ENCODE measurements at regions of chr12 and their contacts with region 1.

Region 1: DNA sequence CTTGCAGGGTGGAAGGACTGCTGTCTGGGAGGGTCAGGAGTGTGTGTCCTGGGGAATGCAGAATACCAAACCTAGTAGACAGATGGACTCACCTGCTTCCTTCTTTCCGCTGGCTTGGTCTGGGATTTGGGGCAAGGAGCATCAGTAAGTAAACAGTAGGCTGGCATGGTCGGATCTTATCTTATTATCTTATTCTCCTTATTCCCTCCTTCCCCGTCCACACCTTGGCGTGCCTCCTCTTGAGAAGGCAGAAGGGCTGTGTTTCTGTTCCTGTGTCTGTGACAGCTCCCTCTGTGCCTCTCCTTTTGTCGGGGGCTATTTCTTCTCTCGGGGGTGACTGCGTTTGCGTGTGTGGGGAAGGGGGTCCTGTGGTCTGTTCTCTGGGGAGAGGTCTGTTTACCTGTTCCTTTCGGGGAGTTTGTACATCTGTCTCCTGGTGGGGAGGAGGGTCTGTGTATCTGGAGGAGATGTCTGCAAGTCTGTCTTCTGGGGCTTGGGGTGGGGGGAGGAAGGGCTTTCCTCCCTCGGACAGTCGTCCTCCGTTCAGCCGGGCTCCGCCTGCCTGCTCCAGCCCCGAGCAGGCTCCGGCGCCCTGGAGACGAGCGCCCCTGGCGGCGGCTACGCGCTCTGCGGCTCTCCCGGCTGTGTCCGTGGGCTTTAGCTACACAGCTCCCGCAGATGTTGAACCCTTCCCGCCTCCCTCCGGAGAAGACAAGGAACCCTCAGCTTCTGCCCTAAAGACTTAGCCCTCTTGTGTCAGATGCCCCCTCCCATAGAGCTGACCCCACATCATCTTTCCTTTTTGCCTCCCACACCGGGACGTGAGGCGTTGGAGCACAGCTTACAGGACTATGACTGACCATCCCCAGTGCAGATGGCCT is 4.3 kb downstream of the KRT86 start:
- DNase-seq: no peak
- ATAC-seq: peak; percentile 83
- H3K4me3 ChIP-seq: peak overlapping the region in 1 of 2 experiments; percentile 27; a peak in 2 of 4 replicates
- H3K27ac ChIP-seq: peak overlapping the region; percentile 96
- H3K4me1 ChIP-seq: peaks cover 39% of the 10 kb centered on the region
- H3K27me3 ChIP-seq: no peaks in the 10 kb centered on the region
- CTCF ChIP-seq: peak; percentile 99

Region 2: GRCh38 chr12:52087961-52088820 is 190.6 kb before region 1 on chr12:
- CTCF ChIA-PET with region 1: no interaction called
- POLR2A ChIA-PET with region 1: no interaction called
- in situ Hi-C with region 1: no loop called
- intact Hi-C with region 1: no loop called
- DNase-seq: no peak
- ATAC-seq: 0 out of 2 replicates have a peak, but pooled peaks have one; percentile 20
- H3K4me3 ChIP-seq: no peak overlapping the region
- H3K27ac ChIP-seq: no peak overlapping the region
- H3K4me1 ChIP-seq: no peaks in the 10 kb centered on the region
- H3K27me3 ChIP-seq: peaks cover 14% of the 10 kb centered on the region
- CTCF ChIP-seq: no peak

Region 3: DNA sequence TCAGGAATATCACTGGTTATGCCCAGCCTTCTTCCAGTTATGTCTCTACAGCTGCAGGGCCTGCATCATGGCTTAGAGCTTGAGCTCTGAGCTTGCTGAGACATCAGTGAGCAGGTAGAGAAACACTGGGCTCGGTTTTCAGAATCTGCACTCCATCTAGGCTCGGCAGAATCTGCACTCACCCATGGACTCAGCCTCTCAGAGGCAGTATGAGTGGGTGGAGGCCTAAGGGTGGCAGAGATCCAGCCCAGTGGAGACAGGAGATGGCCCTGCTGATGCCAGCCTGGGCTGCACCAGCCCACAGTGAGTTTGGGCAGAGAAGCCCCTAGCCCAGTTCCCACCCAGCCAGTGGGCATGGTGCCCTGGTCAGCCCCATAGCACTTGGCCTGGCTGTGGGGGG is 99.8 kb before region 1 on chr12:
- CTCF ChIA-PET with region 1: no interaction called
- POLR2A ChIA-PET with region 1: no interaction called
- in situ Hi-C with region 1: no loop called
- intact Hi-C with region 1: no loop called
- DNase-seq: no peak
- ATAC-seq: no peak
- H3K4me3 ChIP-seq: no peak overlapping the region
- H3K27ac ChIP-seq: no peak overlapping the region
- H3K4me1 ChIP-seq: peaks cover 46% of the 10 kb centered on the region
- H3K27me3 ChIP-seq: no peaks in the 10 kb centered on the region
- CTCF ChIP-seq: no peak

Region 4: GRCh38 chr12:52215587-52216048 is 63.2 kb before region 1 on chr12:
- CTCF ChIA-PET with region 1: interaction called, 16 read pairs
- POLR2A ChIA-PET with region 1: no interaction called
- in situ Hi-C with region 1: no loop called
- intact Hi-C with region 1: loop called (anchors 10 kb)
- DNase-seq: peak; percentile 60
- ATAC-seq: peak; percentile 79
- H3K4me3 ChIP-seq: no peak overlapping the region
- H3K27ac ChIP-seq: peak overlapping the region; percentile 91
- H3K4me1 ChIP-seq: peaks cover 43% of the 10 kb centered on the region
- H3K27me3 ChIP-seq: no peaks in the 10 kb centered on the region
- CTCF ChIP-seq: no peak

Region 5: GRCh38 chr12:52221912-52222457 is 56.8 kb before region 1 on chr12:
- CTCF ChIA-PET with region 1: interaction called, 3 read pairs
- POLR2A ChIA-PET with region 1: interaction called, 3 read pairs
- in situ Hi-C with region 1: no loop called
- intact Hi-C with region 1: loop called (anchors 10 kb)
- DNase-seq: no peak
- ATAC-seq: peak; percentile 60
- H3K4me3 ChIP-seq: no peak overlapping the region
- H3K27ac ChIP-seq: peak overlapping the region; percentile 71
- H3K4me1 ChIP-seq: peaks cover 21% of the 10 kb centered on the region
- H3K27me3 ChIP-seq: no peaks in the 10 kb centered on the region
- CTCF ChIP-seq: peak; percentile 77

Region 6: GRCh38 chr12:52327052-52327829 is 48.5 kb after region 1 on chr12:
- CTCF ChIA-PET with region 1: interaction called, 3 read pairs
- POLR2A ChIA-PET with region 1: no interaction called
- in situ Hi-C with region 1: loop called (anchors 5 kb)
- intact Hi-C with region 1: no loop called
- DNase-seq: peak; percentile 96
- ATAC-seq: peak; percentile 97
- H3K4me3 ChIP-seq: no peak overlapping the region
- H3K27ac ChIP-seq: peak overlapping the region; percentile 5
- H3K4me1 ChIP-seq: peaks cover 7% of the 10 kb centered on the region
- H3K27me3 ChIP-seq: no peaks in the 10 kb centered on the region
- CTCF ChIP-seq: peak; percentile 97

Region 7: DNA sequence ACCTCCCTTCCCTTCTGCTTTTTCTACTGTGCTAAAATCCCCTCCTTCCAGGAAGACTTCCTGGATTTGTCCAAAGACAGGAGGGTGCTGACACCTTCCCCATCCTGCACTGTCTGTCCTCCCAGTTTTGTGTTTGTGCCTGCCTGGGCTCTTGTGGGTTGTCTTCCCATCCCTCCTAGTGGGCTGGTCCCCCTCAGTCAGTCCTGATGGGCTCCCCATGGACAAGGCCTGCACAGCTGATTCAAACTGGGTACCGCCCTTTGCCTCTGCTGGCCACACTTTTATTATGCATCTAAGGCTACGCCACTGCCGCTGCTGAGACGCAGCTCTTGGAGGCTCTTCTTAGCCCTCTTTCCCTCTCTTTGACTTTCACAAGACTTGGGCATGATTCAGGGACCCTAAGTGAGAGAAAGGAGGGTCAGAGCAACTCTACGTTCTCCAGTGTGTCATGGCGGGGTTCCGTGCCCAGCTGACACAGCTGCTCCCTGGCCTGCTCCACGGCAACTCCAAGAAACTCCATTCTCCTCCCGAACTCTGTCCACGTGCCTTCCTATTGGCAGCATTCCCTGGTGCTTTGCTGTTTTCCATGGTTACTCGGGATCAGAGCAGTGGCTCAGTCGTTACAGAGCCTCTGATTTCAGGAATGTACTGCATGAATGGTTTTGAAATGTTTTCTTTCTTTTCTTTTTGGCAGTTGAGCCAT is 92.3 kb after region 1 on chr12:
- CTCF ChIA-PET with region 1: no interaction called
- POLR2A ChIA-PET with region 1: no interaction called
- in situ Hi-C with region 1: no loop called
- intact Hi-C with region 1: no loop called
- DNase-seq: no peak
- ATAC-seq: no peak
- H3K4me3 ChIP-seq: no peak overlapping the region
- H3K27ac ChIP-seq: no peak overlapping the region
- H3K4me1 ChIP-seq: no peaks in the 10 kb centered on the region; the same call in 1 of the 2 replicates
- H3K27me3 ChIP-seq: no peaks in the 10 kb centered on the region
- CTCF ChIP-seq: no peak